Caco-2 (cell line): ENCODE measurements at regions of chr14 and their contacts with region 1.

Region 1: DNA sequence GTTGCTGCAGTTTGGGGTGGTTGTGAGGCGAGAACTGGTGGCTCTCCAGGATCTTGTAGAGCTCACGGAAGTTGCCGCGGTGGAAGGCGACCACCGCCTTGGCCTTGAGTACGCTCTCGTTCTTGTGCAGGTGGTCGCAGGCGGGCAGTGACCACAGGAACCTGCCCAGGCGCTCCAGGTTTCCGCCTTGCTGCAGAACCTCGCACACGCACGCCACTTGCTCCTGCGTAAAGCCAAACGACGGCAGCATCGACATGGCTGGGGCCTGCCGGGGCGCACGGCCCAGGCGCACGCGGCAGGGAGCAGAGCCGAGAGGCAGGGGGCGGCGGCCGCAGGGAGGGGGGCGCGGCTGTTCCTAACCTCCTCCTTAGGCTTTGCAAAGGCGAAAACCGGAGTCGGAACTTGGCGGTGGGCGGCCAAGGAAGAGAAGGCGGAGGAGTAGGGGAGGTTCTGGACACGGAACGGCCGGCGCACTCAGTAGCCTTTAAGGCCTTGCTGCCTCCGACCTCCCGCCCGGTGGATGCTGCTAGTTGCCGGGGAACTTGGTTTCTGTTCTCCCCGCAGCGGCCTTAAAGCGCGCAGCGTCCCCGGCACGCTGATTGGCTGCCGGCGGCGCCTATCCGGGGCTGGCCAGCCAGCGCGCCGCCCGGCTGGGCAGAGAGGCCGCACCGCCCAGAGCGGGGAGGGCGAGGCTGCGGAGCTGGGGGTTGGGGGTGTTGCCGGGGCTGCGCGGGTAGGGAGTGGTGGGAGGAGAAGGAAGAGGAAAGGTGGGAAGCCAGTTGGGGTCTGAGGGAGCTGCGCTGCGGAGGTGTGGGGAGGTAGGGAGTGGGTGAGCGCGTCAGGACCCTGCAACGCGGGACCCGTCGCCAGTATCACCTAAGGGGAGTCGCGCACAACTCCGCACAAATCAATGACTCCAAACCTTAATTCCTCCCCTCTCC is at the start of gene SIX1:
- DNase-seq: peak; percentile 75 to 76
- H3K4me3 ChIP-seq: peak within 1 kb of the TSS; percentile 42
- H3K4me3 Mint-ChIP-seq: peak within 1 kb of the TSS; percentile 77
- H3K27ac Mint-ChIP-seq: no peak within 1 kb of the TSS
- H3K4me1 ChIP-seq: peaks cover 36% of the 10 kb centered on the region
- H3K4me1 Mint-ChIP-seq: peaks cover 24% of the 10 kb centered on the region
- H3K27me3 ChIP-seq: peaks cover 6% of the 10 kb centered on the region
- H3K27me3 Mint-ChIP-seq: peaks cover 33% of the 10 kb centered on the region
- CTCF ChIP-seq: no peak
- total RNA-seq, gene SIX1: 0.26 and 0.32 TPM in 2 replicates

Region 2: GRCh38 chr14:60430276-60430675 is 218.9 kb before region 1 on chr14:
- CTCF ChIA-PET with region 1: no interaction called
- POLR2A ChIA-PET with region 1: no interaction called
- intact Hi-C with region 1: loop called (anchors 1 kb)
- DNase-seq: peak in 1 of 2 experiments; percentile 50
- H3K4me3 ChIP-seq: no peak overlapping the region
- H3K4me3 Mint-ChIP-seq: no peak overlapping the region
- H3K27ac Mint-ChIP-seq: peak overlapping the region; percentile 17
- H3K4me1 ChIP-seq: peaks cover 10% of the 10 kb centered on the region; the same call in 1 of the 2 replicates
- H3K4me1 Mint-ChIP-seq: peaks cover 14% of the 10 kb centered on the region
- H3K27me3 ChIP-seq: no peaks in the 10 kb centered on the region
- H3K27me3 Mint-ChIP-seq: no peaks in the 10 kb centered on the region
- CTCF ChIP-seq: no peak

Region 3: DNA sequence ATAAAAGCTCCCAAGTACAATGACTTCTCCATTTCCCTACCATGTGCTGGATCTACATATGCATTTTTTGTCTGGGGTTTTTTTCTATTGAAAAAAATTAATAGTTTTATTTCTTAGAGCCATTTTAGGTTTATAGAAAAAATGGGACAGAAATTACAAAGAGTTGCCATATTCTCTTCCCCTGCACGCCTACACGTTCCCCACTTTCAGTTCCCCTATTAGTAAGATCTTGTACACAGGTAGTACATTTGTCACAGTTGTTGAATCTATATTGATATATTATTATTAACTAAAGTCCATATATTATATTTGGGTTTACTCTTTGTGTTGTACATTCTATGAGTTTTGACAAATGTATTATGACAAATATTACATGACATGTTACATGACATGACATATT is 104.5 kb before region 1 on chr14:
- CTCF ChIA-PET with region 1: no interaction called
- POLR2A ChIA-PET with region 1: no interaction called
- intact Hi-C with region 1: no loop called
- DNase-seq: no peak
- H3K4me3 ChIP-seq: no peak overlapping the region
- H3K4me3 Mint-ChIP-seq: no peak overlapping the region
- H3K27ac Mint-ChIP-seq: no peak overlapping the region
- H3K4me1 ChIP-seq: no peaks in the 10 kb centered on the region
- H3K4me1 Mint-ChIP-seq: no peaks in the 10 kb centered on the region
- H3K27me3 ChIP-seq: no peaks in the 10 kb centered on the region
- H3K27me3 Mint-ChIP-seq: peaks cover 13% of the 10 kb centered on the region
- CTCF ChIP-seq: no peak

Region 4: DNA sequence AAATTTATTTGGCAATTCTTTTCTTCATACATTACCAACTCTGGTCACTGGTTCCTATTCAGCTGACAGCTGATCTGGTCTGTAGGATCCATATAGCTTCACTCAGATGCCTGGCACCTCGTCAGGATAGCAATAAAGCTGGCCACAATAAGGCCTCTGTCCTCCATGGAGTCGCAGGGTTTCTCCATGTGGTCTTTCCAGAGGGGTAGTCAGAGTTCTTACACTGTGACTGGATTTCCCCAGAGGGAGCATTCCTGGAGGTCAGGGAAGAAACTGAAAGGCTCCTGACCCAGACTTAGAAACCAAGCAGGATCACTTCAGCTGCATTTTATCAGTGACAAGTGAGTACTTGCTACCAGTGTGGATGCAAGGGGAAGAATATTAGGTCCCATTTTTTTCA is 35.0 kb after region 1 on chr14:
- CTCF ChIA-PET with region 1: no interaction called
- POLR2A ChIA-PET with region 1: no interaction called
- intact Hi-C with region 1: no loop called
- DNase-seq: no peak
- H3K4me3 ChIP-seq: no peak overlapping the region
- H3K4me3 Mint-ChIP-seq: no peak overlapping the region
- H3K27ac Mint-ChIP-seq: no peak overlapping the region
- H3K4me1 ChIP-seq: no peaks in the 10 kb centered on the region
- H3K4me1 Mint-ChIP-seq: no peaks in the 10 kb centered on the region
- H3K27me3 ChIP-seq: no peaks in the 10 kb centered on the region
- H3K27me3 Mint-ChIP-seq: no peaks in the 10 kb centered on the region
- CTCF ChIP-seq: no peak

Region 5: DNA sequence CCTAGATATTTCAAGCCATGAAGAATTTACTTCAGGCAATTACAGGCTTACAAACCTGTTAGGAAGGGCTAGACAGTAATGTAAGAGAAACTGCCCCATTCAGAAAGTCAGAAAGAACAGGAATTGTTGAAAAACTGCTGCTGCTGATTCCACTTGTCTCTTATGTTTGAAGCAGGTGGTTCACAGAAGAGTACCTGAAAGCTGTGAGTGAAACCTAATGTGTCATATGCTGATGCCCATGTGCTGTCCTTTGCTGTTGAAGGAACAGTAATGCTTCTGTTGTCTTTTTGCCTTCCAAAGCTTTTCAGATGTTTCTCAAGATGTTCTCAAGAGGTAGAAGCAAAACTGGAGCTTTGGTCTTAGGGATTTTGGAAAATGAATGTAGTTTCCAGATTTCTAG is 124.4 kb after region 1 on chr14:
- CTCF ChIA-PET with region 1: no interaction called
- POLR2A ChIA-PET with region 1: interaction called, 10 read pairs
- intact Hi-C with region 1: no loop called
- DNase-seq: no peak
- H3K4me3 ChIP-seq: no peak overlapping the region
- H3K4me3 Mint-ChIP-seq: no peak overlapping the region
- H3K27ac Mint-ChIP-seq: no peak overlapping the region
- H3K4me1 ChIP-seq: no peaks in the 10 kb centered on the region
- H3K4me1 Mint-ChIP-seq: no peaks in the 10 kb centered on the region
- H3K27me3 ChIP-seq: no peaks in the 10 kb centered on the region
- H3K27me3 Mint-ChIP-seq: no peaks in the 10 kb centered on the region
- CTCF ChIP-seq: no peak

Region 6: DNA sequence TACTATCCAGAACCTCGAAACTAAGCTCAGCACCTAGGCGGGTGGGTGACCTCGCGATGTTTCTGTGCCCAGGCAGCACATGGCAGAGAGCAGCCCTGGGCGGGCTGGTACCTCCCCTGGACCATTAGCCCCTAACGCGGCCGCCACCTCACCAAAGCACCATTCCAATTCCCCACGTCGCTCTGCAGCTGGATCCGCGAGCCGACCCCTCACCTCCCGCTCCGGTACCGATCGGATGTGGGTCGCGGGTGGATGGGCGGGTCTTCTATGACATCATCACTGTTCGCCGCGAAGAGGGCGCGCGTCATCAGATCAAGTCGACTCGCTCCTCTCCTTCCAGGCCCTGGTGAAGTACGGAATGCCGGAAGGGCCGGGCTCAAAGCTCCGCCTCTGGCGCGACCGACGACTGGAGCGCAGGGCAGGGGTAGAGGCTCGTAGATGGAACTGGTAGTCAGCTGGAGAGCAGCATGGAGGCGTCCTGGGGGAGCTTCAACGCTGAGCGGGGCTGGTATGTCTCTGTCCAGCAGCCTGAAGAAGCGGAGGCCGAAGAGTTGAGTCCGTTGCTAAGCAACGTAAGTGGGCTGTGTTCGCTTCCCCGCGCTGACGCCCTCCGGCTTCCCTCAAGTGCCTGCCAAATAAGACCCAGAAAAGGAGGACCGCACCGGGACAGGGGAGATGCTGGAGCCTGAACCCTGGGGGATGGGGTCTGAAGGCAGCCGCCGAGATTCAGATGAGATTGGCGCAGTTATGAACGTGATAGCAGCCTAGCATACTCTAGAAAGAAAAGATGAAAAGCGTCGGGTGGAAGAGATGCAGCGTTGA is 331.8 kb after region 1 on chr14 and contains the starts of genes SLC38A6 and TRMT5:
- CTCF ChIA-PET with region 1: no interaction called
- POLR2A ChIA-PET with region 1: no interaction called
- intact Hi-C with region 1: loop called (anchors 1 kb)
- DNase-seq: peak; percentile 94 to 95
- H3K4me3 ChIP-seq: peak within 1 kb of the TSS; percentile 81
- H3K4me3 Mint-ChIP-seq: no peak within 1 kb of the TSS
- H3K27ac Mint-ChIP-seq: no peak within 1 kb of the TSS
- H3K4me1 ChIP-seq: peaks cover 6% of the 10 kb centered on the region; the same call in 1 of the 2 replicates
- H3K4me1 Mint-ChIP-seq: no peaks in the 10 kb centered on the region
- H3K27me3 ChIP-seq: no peaks in the 10 kb centered on the region
- H3K27me3 Mint-ChIP-seq: no peaks in the 10 kb centered on the region
- CTCF ChIP-seq: no peak
- total RNA-seq, gene SLC38A6: 10.2 and 11.5 TPM in 2 replicates
- total RNA-seq, gene TRMT5: 16.3 and 16.5 TPM in 2 replicates